A549 (cell line): ENCODE measurements at regions of chrX and their contacts with region 1.

Region 1: GRCh38 chrX:134520860-134521390 is 61.0 kb downstream of the HPRT1 start:
- DNase-seq: peak; percentile 50 to 82
- ATAC-seq: peak; percentile 95 to 99
- H3K4me3 ChIP-seq: no peak overlapping the region
- H3K27ac ChIP-seq: peak overlapping the region; percentile 72 to 83
- H3K4me1 ChIP-seq: peaks cover 12% of the 10 kb centered on the region
- CTCF ChIP-seq: peak; percentile 69
- EP300 ChIP-seq: no peak
- POLR2A ChIP-seq: no peak
- RAD21 ChIP-seq: peak; percentile 84 to 90

Region 2: DNA sequence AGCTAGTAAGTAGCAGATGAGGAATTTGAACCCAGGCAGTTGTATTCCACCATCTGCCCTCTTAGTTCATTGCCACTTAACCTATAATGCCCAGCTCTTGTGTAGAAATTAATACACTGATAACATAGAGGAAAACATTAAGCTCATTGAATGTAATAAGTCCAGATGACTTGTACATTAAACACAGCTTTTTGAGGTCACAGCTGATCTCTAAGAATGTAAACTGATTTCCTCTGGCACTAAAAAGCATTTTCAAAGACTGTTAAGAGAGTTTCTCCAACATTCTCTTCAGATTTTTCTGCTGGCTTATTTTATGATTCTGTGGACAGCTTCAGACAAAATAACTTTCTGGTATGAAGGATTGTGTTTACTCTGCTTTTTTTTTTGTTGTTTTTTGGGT is 18.2 kb before region 1 on chrX:
- CTCF ChIA-PET with region 1: interaction called, 11 read pairs
- POLR2A ChIA-PET with region 1: no interaction called
- DNase-seq: no peak
- ATAC-seq: no peak
- H3K4me3 ChIP-seq: no peak overlapping the region
- H3K27ac ChIP-seq: no peak overlapping the region
- H3K4me1 ChIP-seq: 0 out of 3 replicates have a peak, but pooled peaks cover 3% of the 10 kb centered on the region
- CTCF ChIP-seq: no peak
- EP300 ChIP-seq: no peak
- POLR2A ChIP-seq: no peak
- RAD21 ChIP-seq: no peak

Region 3: DNA sequence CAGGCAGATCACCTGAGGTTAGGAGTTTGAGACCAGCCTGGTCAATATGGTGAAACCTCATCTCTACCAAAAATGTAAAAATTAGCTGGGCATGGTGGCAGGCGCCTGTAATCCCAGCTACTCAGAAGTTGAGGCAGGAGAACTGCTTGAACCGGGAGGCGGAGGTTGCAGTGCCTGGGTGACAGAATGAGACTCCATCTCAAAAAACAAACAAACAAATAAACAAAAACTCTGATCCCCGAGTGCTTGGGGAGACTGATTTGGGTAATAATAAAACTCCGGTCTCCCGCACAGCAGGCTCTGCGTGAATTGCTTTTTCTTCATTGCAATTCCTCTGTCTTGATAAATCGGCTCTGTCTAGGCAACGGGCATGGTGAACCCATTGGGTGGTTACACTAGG is 12.4 kb after region 1 on chrX:
- CTCF ChIA-PET with region 1: interaction called, 10 read pairs
- POLR2A ChIA-PET with region 1: interaction called, 7 read pairs
- DNase-seq: no peak
- ATAC-seq: no peak
- H3K4me3 ChIP-seq: no peak overlapping the region
- H3K27ac ChIP-seq: peak overlapping the region; percentile 50 to 95; a peak in 4 of 6 replicates
- H3K4me1 ChIP-seq: peaks cover 27% of the 10 kb centered on the region
- CTCF ChIP-seq: no peak
- EP300 ChIP-seq: no peak
- POLR2A ChIP-seq: no peak
- RAD21 ChIP-seq: no peak

Region 4: DNA sequence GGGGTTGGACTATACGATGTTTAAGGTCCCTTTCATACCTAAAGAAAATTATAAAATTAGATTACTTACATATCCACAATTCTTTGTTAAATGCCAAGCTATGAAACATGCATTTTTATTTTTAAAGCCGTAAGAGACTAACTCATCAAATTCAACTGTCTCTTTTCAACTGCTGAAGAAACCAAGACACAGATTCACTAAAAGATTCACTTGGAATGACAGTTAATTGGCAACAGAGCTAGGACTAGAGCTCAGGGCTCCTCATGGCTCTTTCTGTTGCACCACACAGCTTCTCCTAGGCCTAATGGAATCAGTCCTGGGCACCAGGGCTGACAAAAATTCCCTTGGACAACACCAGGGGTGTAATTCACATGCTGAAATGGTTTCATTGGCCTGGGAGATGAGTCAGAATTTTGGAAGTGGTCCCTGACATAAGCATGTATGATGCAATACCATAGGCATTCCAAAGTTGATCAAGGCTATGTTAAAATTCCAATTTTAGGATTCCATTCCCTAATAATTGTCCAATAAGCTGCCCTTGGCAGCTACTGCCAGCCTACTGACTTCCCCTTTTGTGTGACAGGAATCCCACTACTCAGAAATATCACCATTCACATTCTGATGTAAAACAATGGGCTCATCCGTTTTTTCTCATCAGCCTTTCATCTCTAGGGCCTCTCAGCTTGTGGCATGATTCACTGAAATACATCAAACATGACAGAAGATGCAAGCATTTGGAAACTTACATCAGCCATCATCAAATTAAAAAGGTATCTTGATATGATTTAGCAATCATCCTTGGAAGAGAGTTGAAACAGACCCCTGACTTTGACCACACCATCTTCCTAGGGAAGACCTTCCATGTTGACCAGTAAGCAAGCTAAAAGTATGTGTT is 83.1 kb after region 1 on chrX:
- CTCF ChIA-PET with region 1: interaction called, 12 read pairs
- POLR2A ChIA-PET with region 1: no interaction called
- DNase-seq: peak; percentile 73 to 79
- ATAC-seq: peak; percentile 87 to 88
- H3K4me3 ChIP-seq: no peak overlapping the region
- H3K27ac ChIP-seq: peak overlapping the region; percentile 94 to 99
- H3K4me1 ChIP-seq: peaks cover 35% of the 10 kb centered on the region
- CTCF ChIP-seq: no peak
- EP300 ChIP-seq: peak; percentile 19 to 82; a peak in 3 of 5 replicates
- POLR2A ChIP-seq: no peak
- RAD21 ChIP-seq: peak; percentile 43 to 44

Region 5: GRCh38 chrX:134753718-134754008 is 232.7 kb after region 1 on chrX:
- CTCF ChIA-PET with region 1: interaction called, 77 read pairs
- POLR2A ChIA-PET with region 1: interaction called, 4 read pairs
- DNase-seq: peak; percentile 29 to 74
- ATAC-seq: peak; percentile 66 to 86; a peak in 4 of 6 replicates
- H3K4me3 ChIP-seq: 0 out of 3 replicates have a peak overlapping the region, but pooled peaks have one; percentile 28
- H3K27ac ChIP-seq: peak overlapping the region; percentile 65 to 80
- H3K4me1 ChIP-seq: peaks cover 24% of the 10 kb centered on the region
- CTCF ChIP-seq: peak; percentile 68
- EP300 ChIP-seq: no peak
- POLR2A ChIP-seq: no peak
- RAD21 ChIP-seq: peak; percentile 87 to 90

Region 6: GRCh38 chrX:134782796-134783195 is 261.9 kb after region 1 on chrX:
- CTCF ChIA-PET with region 1: interaction called, 14 read pairs
- POLR2A ChIA-PET with region 1: no interaction called
- DNase-seq: peak in 1 of 2 experiments; percentile 35
- ATAC-seq: peak in 1 of 2 experiments; percentile 54; a peak in 2 of 6 replicates
- H3K4me3 ChIP-seq: no peak overlapping the region
- H3K27ac ChIP-seq: peak overlapping the region in 1 of 2 experiments; percentile 35; a peak in 1 of 6 replicates
- H3K4me1 ChIP-seq: peaks cover 11% of the 10 kb centered on the region; the same call in 2 of the 3 replicates
- CTCF ChIP-seq: peak; percentile 66
- EP300 ChIP-seq: no peak
- POLR2A ChIP-seq: no peak
- RAD21 ChIP-seq: peak; percentile 62

Region 7: DNA sequence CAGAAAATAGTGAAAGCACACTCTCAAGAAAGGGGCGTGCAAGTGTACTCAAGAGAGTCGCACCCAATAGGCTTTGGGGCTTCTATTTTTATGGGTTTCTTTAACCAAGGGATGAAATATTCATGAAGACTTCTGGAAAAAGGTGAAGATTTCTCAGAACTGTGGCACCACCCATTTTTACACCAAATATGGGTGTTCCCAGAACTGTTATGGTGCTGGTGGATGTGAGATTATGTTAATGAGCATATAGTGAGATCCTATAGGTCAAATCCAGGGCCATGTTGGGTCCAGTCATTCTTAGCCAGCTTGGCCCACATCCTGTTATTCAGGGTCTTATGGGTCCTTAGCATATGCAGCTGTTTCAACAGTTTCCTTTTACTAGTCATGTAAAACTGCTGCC is 408.9 kb after region 1 on chrX:
- CTCF ChIA-PET with region 1: no interaction called
- POLR2A ChIA-PET with region 1: no interaction called
- DNase-seq: no peak
- ATAC-seq: no peak
- H3K4me3 ChIP-seq: no peak overlapping the region
- H3K27ac ChIP-seq: no peak overlapping the region
- H3K4me1 ChIP-seq: peaks cover 19% of the 10 kb centered on the region; the same call in 2 of the 3 replicates
- CTCF ChIP-seq: no peak
- EP300 ChIP-seq: no peak
- POLR2A ChIP-seq: no peak
- RAD21 ChIP-seq: no peak

Region 8: DNA sequence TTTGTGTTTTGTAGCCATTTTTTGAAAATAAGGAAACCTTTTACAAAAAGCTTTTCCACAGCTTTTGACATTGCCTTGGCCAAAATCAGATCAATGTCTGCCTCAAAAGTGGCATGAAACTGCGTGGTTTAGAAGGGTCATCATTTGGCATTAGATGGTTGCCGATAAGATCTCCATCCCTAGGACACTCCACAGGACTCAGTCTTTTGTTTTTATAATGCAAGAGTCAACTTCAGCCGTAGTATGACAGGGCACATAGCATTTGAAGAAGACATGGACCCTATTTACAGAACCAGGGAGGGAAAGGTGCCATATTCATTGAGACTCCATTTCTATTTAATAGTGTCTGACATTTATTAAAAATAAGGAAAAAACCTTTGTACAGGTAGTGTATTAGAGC is 529.7 kb after region 1 on chrX:
- CTCF ChIA-PET with region 1: no interaction called
- POLR2A ChIA-PET with region 1: no interaction called
- DNase-seq: no peak
- ATAC-seq: no peak
- H3K4me3 ChIP-seq: peak overlapping the region; percentile 70; the same call in 2 of the 3 replicates
- H3K27ac ChIP-seq: peak overlapping the region in 1 of 2 experiments; percentile 99; a peak in 3 of 6 replicates
- H3K4me1 ChIP-seq: peaks cover 8% of the 10 kb centered on the region; the same call in 2 of the 3 replicates
- CTCF ChIP-seq: no peak
- EP300 ChIP-seq: no peak
- POLR2A ChIP-seq: no peak
- RAD21 ChIP-seq: no peak